ENCODE measurements at regions of chr11 and their contacts with region 1.

Region 1: DNA sequence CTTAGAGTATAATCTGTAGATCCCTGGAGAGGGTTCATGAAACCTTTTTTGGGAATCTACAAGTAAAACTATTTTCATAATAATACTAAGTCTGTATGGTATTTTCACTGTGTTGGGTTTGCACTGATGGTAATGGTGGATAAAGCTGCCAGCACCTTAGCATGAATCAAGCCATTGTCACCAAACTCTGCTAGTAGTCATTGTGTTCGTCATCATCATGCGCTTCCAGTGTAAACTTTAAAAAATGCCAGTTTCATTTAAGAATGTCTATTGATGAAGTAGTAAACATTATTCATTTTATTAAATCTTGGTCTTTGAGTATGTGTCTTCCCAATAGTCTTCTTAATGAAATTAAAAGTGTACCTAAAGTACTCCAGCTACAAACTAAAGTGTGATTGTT is 15.0 kb downstream of the ALKBH3 start:
- DNase-seq: no peak
- H3K4me3 Mint-ChIP-seq: no peak overlapping the region
- H3K27ac Mint-ChIP-seq: no peak overlapping the region
- H3K4me1 Mint-ChIP-seq: no peaks in the 10 kb centered on the region
- H3K27me3 Mint-ChIP-seq: no peaks in the 10 kb centered on the region

Region 2: GRCh38 chr11:43880640-43881159 is 14.9 kb before region 1 on chr11 and contains the start of gene ALKBH3:
- CTCF ChIA-PET with region 1: interaction called, 13 read pairs
- POLR2A ChIA-PET with region 1: no interaction called
- DNase-seq: peak; percentile 91
- H3K4me3 Mint-ChIP-seq: peak within 1 kb of the TSS; percentile 92
- H3K27ac Mint-ChIP-seq: peak within 1 kb of the TSS; percentile 72
- H3K4me1 Mint-ChIP-seq: peaks cover 23% of the 10 kb centered on the region
- H3K27me3 Mint-ChIP-seq: peaks cover 20% of the 10 kb centered on the region
- total RNA-seq, gene ALKBH3: 25.4 to 32.0 TPM